ENCODE measurements at regions of chr9 and their contacts with region 1.

Region 1: GRCh38 chr9:27019589-27019988 is 14.1 kb upstream of the LRRC19 start:
- DNase-seq: peak; percentile 4
- H3K4me3 ChIP-seq: no peak overlapping the region
- CTCF ChIP-seq: no peak

Region 2: DNA sequence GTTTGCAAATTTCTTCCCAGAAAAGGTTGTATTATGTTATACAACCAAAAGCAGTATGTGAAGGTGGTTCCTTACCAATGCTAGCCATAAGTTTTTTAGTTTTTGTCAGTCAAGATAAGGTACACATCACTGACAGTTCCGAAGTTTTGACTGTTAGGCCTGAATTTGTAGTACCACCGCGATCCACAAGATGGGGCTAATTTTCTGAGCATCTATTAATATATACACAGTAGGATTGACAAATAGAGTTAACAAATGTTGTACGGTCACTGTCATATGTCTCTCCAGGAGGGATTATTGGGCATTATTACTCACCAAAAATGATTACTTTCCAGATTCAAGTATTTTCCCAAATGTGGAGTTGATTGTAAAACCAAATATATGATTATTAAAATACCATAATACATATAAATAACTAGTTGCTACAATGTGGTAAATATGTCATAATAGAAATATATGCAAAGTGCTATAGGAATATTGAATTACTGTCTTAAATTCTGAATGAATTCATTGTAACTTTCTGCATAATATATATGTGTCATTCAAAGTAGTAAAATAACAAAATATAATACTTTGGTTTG is 14.3 kb after region 1 on chr9:
- CTCF ChIA-PET with region 1: interaction called, 26 read pairs
- POLR2A ChIA-PET with region 1: no interaction called
- DNase-seq: no peak
- H3K4me3 ChIP-seq: no peak overlapping the region
- CTCF ChIP-seq: peak; percentile 55